GM12878 (cell line): ENCODE measurements at regions of chr1 and their contacts with region 1.

Region 1: GRCh38 chr1:179706339-179706941 is 36.7 kb upstream of the FAM163A start:
- DNase-seq: no peak
- ATAC-seq: peak; percentile 42
- H3K4me3 ChIP-seq: no peak overlapping the region
- H3K27ac ChIP-seq: no peak overlapping the region
- H3K4me1 ChIP-seq: no peaks in the 10 kb centered on the region
- H3K27me3 ChIP-seq: no peaks in the 10 kb centered on the region
- CTCF ChIP-seq: peak; percentile 63 to 81 (median 76)
- EP300 ChIP-seq: no peak
- POLR2A ChIP-seq: no peak
- RAD21 ChIP-seq: peak; percentile 93

Region 2: DNA sequence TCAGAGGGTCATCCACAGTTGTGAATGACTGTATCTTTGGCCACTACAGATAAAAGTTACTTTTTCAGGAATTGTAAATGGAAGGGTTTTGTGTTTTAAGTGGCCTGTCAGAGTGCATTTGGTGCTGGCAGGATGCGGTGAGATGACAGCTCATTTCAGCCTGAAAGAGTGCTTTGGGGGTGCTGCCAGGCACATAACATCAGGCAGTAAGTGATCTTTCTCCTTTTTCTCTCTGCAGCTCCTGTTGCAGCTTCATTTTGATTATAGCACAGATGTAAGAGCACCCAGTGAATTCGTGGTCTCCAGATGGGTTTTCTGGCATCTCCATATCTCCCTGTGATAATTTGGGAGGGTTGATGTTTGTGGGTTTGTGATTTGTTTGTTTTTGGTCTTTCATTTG is 21.8 kb after region 1 on chr1:
- CTCF ChIA-PET with region 1: interaction called, 15 read pairs
- POLR2A ChIA-PET with region 1: no interaction called
- RAD21 ChIA-PET with region 1: interaction called, 5 read pairs
- SMC1A ChIA-PET with region 1: interaction called, 10 read pairs
- in situ Hi-C with region 1: no loop called
- intact Hi-C with region 1: no loop called
- DNase-seq: no peak
- ATAC-seq: peak; percentile 54
- H3K4me3 ChIP-seq: no peak overlapping the region
- H3K27ac ChIP-seq: no peak overlapping the region
- H3K4me1 ChIP-seq: no peaks in the 10 kb centered on the region
- H3K27me3 ChIP-seq: no peaks in the 10 kb centered on the region; a peak in 1 of 4 replicates
- CTCF ChIP-seq: no peak
- EP300 ChIP-seq: no peak
- POLR2A ChIP-seq: no peak
- RAD21 ChIP-seq: no peak

Region 3: GRCh38 chr1:179742717-179743678 is 36.6 kb after region 1 on chr1 and contains the start of gene FAM163A:
- CTCF ChIA-PET with region 1: interaction called, 9 read pairs
- POLR2A ChIA-PET with region 1: no interaction called
- RAD21 ChIA-PET with region 1: no interaction called
- SMC1A ChIA-PET with region 1: interaction called, 4 read pairs
- in situ Hi-C with region 1: no loop called
- intact Hi-C with region 1: loop called (anchors 1 kb)
- DNase-seq: no peak
- ATAC-seq: no peak; the same call in 1 of the 3 replicates
- H3K4me3 ChIP-seq: no peak within 1 kb of the TSS
- H3K27ac ChIP-seq: no peak within 1 kb of the TSS
- H3K4me1 ChIP-seq: no peaks in the 10 kb centered on the region
- H3K27me3 ChIP-seq: peaks cover 6% of the 10 kb centered on the region in 2 experiments; a peak in 3 of 4 replicates
- CTCF ChIP-seq: no peak
- EP300 ChIP-seq: no peak
- POLR2A ChIP-seq: no peak
- RAD21 ChIP-seq: no peak
- polyA plus RNA-seq, gene FAM163A: not detected

Region 4: DNA sequence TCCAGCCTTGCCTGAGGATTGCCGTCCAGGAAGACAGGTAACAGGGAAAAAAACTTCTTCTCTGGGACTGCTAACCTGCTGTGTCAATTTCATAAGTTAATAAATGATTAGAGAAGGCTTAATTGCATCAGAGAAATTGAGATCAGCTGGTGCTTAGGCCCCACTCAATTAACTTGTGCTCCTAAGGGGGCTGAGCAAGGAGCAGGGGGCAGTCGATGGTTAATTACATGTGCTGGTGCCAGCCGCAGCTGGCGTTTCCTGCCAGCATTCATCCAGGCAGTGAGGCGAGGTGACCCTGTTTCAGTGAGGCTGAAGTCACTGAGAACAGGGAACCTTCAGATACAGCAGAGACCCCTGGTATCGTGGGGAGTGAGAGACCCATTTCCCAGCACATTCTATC is 96.7 kb after region 1 on chr1:
- CTCF ChIA-PET with region 1: interaction called, 938 read pairs
- POLR2A ChIA-PET with region 1: no interaction called
- RAD21 ChIA-PET with region 1: interaction called, 474 read pairs
- SMC1A ChIA-PET with region 1: interaction called, 295 read pairs
- in situ Hi-C with region 1: no loop called
- intact Hi-C with region 1: no loop called
- DNase-seq: no peak
- ATAC-seq: no peak
- H3K4me3 ChIP-seq: no peak overlapping the region
- H3K27ac ChIP-seq: no peak overlapping the region
- H3K4me1 ChIP-seq: no peaks in the 10 kb centered on the region; the same call in 1 of the 2 replicates
- H3K27me3 ChIP-seq: no peaks in the 10 kb centered on the region
- CTCF ChIP-seq: no peak
- EP300 ChIP-seq: no peak
- POLR2A ChIP-seq: no peak
- RAD21 ChIP-seq: no peak

Region 5: GRCh38 chr1:180057883-180058396 is 351.5 kb after region 1 on chr1:
- CTCF ChIA-PET with region 1: no interaction called
- POLR2A ChIA-PET with region 1: no interaction called
- RAD21 ChIA-PET with region 1: no interaction called
- SMC1A ChIA-PET with region 1: no interaction called
- in situ Hi-C with region 1: no loop called
- intact Hi-C with region 1: no loop called
- DNase-seq: no peak
- ATAC-seq: peak; percentile 69
- H3K4me3 ChIP-seq: no peak overlapping the region
- H3K27ac ChIP-seq: peak overlapping the region; percentile 24; the same call in 1 of the 2 replicates
- H3K4me1 ChIP-seq: no peaks in the 10 kb centered on the region
- H3K27me3 ChIP-seq: no peaks in the 10 kb centered on the region
- CTCF ChIP-seq: no peak
- EP300 ChIP-seq: no peak
- POLR2A ChIP-seq: no peak
- RAD21 ChIP-seq: no peak

Region 6: DNA sequence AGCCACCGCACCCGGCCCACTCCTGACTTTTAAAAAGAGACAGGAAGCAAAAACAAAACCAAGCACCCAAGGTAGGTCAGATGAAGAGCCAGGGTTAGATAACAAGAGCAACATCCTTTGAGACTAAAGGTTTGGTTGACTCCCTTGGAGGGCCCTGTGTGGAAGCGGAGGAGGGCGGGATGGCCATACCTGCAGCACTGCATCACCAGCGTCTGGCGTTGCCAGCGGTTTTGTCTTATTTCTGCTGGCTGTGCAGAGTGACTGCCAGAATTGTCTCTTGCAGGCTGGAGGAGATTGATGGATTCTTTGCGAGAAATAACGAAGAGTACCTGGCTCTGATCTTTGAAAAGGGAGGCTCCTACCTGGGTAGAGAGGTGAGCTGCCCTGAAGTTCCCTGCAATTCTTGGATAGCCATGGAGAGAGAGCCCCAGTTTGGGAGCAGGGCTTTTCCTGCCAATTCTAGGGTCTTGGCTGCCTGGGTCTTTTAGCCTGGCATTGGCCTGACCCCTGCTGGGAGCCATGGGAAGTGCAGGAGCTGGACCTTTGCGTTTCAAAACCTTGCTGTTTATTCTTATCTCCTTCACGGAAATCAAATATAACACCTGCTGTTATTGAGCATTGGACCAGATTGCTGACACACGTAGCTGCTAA is 472.2 kb after region 1 on chr1:
- CTCF ChIA-PET with region 1: interaction called, 41 read pairs
- POLR2A ChIA-PET with region 1: interaction called, 3 read pairs
- RAD21 ChIA-PET with region 1: interaction called, 20 read pairs
- SMC1A ChIA-PET with region 1: interaction called, 12 read pairs
- in situ Hi-C with region 1: loop called (anchors 5 kb)
- intact Hi-C with region 1: loop called (anchors 2 kb)
- DNase-seq: no peak
- ATAC-seq: peak; percentile 82
- H3K4me3 ChIP-seq: no peak overlapping the region
- H3K27ac ChIP-seq: no peak overlapping the region
- H3K4me1 ChIP-seq: no peaks in the 10 kb centered on the region
- H3K27me3 ChIP-seq: no peaks in the 10 kb centered on the region
- CTCF ChIP-seq: peak; percentile 97 to 99 (median 98)
- EP300 ChIP-seq: no peak
- POLR2A ChIP-seq: no peak
- RAD21 ChIP-seq: peak; percentile 97